ENCODE measurements at regions of chr1 and their contacts with region 1.

Region 1: DNA sequence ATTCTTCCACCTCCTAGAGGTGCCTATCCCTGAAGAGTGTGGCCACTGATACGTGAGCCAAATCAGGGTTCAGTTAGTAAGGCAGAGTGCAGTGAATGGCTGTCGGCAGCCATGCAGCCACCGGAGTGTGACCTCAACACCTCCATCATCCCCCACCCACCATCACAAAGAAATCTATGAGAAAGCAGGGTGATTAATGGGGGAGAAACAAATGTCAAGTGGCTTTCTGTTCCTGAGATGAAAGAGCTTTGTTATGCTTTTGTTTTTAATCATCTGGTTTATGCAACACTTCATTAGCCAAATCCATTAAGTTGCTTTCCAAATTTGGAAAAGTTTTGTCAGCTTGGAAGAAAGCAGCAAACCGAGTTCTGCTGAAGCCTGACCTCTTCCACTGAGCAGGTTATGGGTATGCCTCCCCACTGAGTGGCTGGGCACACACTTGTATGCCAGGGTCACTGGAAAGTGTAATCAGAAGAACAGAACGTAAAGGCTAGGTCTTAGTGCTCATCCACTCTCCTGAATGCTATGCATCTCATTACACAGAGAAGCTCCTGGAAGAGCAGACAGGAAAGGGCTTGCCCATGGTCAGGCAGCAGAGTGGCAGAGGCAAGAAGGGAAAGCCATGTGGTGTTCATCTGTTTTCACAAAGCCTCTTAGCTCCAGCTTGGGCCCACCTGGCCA is 57.1 kb upstream of the ATP1B1 start:
- DNase-seq: peak; percentile 66
- H3K4me3 Mint-ChIP-seq: no peak overlapping the region
- H3K27ac Mint-ChIP-seq: no peak overlapping the region
- H3K4me1 Mint-ChIP-seq: peaks cover 50% of the 10 kb centered on the region
- H3K27me3 Mint-ChIP-seq: no peaks in the 10 kb centered on the region

Region 2: DNA sequence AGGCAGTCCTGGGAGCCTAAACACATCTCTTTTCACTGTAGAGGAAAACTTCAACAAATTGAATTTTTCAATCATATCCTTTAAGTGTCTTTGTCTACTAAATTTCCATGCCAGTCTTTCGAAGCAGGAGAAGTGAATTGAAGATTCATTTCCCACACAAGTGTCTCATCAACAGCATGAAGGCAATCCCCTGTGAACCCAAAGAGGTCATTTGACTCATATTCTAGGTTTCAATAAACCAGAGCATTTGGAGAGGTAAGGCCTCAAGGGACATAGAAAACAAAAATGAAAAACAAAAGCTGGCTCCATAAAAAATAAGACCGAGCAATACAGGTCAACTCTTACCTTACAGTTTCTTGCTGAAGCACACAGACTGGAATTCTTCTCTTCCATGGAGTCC is 37.0 kb before region 1 on chr1:
- CTCF ChIA-PET with region 1: no interaction called
- POLR2A ChIA-PET with region 1: no interaction called
- intact Hi-C with region 1: loop called (anchors 1 kb)
- DNase-seq: no peak
- H3K4me3 Mint-ChIP-seq: no peak overlapping the region
- H3K27ac Mint-ChIP-seq: peak overlapping the region; percentile 23
- H3K4me1 Mint-ChIP-seq: peaks cover 10% of the 10 kb centered on the region
- H3K27me3 Mint-ChIP-seq: no peaks in the 10 kb centered on the region